CD4-positive, alpha-beta memory T cell (primary cell): ENCODE measurements at regions of chr6 and their contacts with region 1.

Region 1: GRCh38 chr6:34161857-34162515 is 16.1 kb upstream of the GRM4 start:
- DNase-seq: no peak
- H3K4me3 ChIP-seq: no peak overlapping the region
- H3K4me3 Mint-ChIP-seq: peak overlapping the region in 1 of 8 donors; percentile 7
- H3K27ac ChIP-seq: no peak overlapping the region
- H3K27ac Mint-ChIP-seq: peak overlapping the region in 1 of 7 donors; percentile 66
- H3K4me1 ChIP-seq: peaks cover 4% of the 10 kb centered on the region
- H3K4me1 Mint-ChIP-seq: peaks cover 0 to 8% (median 4%) of the 10 kb centered on the region in 4 donors
- H3K27me3 ChIP-seq: no peaks in the 10 kb centered on the region
- H3K27me3 Mint-ChIP-seq: no peaks in the 10 kb centered on the region

Region 2: DNA sequence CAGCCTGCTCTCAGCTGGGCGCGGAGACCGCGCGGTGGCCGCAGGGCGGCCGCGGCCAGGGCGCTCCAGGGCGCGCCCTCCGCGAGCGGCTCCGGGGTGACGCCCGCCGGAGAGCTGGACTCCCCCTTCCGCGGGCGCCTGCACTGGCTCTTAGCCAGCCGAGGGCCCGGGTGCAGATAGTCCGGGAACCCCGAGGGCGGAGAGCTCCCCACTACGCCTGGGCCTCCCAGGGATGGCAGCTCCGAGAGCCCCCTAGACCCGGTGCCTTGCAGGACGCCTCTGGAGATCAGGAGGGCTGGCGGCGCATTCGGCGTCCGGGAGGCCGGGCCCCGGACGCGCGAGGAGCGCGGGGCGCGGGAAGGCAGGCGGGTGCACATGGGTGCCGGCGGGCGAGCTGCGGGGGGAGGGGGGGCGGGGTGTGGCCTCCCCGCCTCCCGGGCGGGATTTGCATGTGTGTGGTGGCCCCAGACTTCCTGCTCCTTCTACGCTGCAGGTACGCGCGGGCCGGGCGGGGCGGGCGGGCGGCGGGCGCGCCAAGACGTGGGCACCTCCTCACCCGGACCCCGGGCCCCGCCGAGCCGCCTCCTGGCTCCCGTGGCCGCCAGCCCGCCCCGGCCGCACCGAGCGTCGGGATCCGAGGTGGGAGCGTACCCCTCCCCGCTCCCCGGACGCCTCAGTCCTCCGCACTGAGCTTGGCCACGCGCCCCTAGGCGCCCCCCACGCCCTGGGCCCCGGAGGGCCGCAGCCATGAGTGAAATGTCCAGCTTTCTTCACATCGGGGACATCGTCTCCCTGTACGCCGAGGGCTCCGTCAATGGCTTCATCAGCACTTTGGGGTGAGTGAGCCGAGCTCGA is 540.9 kb before region 1 on chr6 and contains the start of gene ITPR3:
- CTCF ChIA-PET with region 1: no interaction called
- POLR2A ChIA-PET with region 1: no interaction called
- intact Hi-C with region 1: no loop called
- DNase-seq: peak; percentile 78 to 85 (median 83)
- H3K4me3 ChIP-seq: peak within 1 kb of the TSS; percentile 71 to 88
- H3K4me3 Mint-ChIP-seq: peak within 1 kb of the TSS; percentile 93 to 99 (median 96)
- H3K27ac ChIP-seq: peak within 1 kb of the TSS; percentile 92
- H3K27ac Mint-ChIP-seq: peak within 1 kb of the TSS; percentile 91 to 98 (median 97)
- H3K4me1 ChIP-seq: peaks cover 48% of the 10 kb centered on the region
- H3K4me1 Mint-ChIP-seq: peaks cover 35 to 62% (median 48%) of the 10 kb centered on the region in 4 donors
- H3K27me3 ChIP-seq: no peaks in the 10 kb centered on the region
- H3K27me3 Mint-ChIP-seq: no peaks in the 10 kb centered on the region
- total RNA-seq, gene ITPR3: 71.2 to 72.4 TPM

Region 3: GRCh38 chr6:34182751-34183531 is 21.0 kb after region 1 on chr6:
- CTCF ChIA-PET with region 1: interaction called, 18 read pairs
- POLR2A ChIA-PET with region 1: interaction called, 4 read pairs
- intact Hi-C with region 1: loop called (anchors 2 kb)
- DNase-seq: peak; percentile 79 to 90 (median 81)
- H3K4me3 ChIP-seq: peak overlapping the region in 1 of 2 donors; percentile 32
- H3K4me3 Mint-ChIP-seq: peak overlapping the region; percentile 45 to 80 (median 74)
- H3K27ac ChIP-seq: peak overlapping the region; percentile 33
- H3K27ac Mint-ChIP-seq: peak overlapping the region; percentile 72 to 95 (median 82)
- H3K4me1 ChIP-seq: peaks cover 25% of the 10 kb centered on the region
- H3K4me1 Mint-ChIP-seq: peaks cover 22 to 26% (median 24%) of the 10 kb centered on the region in 4 donors
- H3K27me3 ChIP-seq: no peaks in the 10 kb centered on the region
- H3K27me3 Mint-ChIP-seq: no peaks in the 10 kb centered on the region

Region 4: DNA sequence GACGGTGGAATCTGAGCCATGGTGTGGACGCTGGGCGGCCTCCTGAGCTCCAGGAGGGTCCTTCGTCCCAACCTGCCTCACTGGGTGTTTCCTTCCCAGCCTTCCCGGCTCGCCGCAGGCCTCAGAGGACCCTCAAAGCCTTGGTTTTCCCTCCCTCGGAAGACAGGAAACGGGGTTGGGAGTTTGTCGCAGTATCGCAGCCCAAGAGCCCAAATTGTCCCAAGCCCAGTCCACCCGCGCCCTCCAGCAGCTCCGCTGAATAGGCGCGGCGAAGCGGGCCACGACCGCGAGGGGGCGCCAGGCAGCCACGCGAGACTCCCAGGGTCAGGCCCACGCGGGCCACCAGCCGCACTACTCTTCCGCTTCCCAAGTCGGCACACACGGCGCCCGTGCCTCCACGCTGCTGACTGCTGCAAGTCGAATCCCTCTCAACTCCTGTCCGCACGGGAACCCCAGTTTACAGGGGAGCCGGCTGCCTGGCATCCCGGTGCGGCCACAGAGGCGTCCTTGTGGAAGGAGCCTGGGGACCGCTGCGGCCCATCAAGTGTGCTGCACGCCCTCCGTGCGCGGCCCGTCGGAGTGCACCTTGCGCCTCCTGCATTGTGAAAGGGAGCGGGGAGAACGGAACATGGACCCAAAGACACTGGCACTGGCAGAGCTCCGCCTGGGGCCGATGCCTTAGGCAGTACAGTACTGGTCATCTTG is 34.3 kb after region 1 on chr6:
- CTCF ChIA-PET with region 1: interaction called, 30 read pairs
- POLR2A ChIA-PET with region 1: interaction called, 4 read pairs
- intact Hi-C with region 1: loop called (anchors 1 kb)
- DNase-seq: peak; percentile 81 to 89 (median 85)
- H3K4me3 ChIP-seq: peak overlapping the region; percentile 47 to 58
- H3K4me3 Mint-ChIP-seq: peak overlapping the region; percentile 79 to 89 (median 85)
- H3K27ac ChIP-seq: peak overlapping the region; percentile 48
- H3K27ac Mint-ChIP-seq: peak overlapping the region in 6 of 7 donors; percentile 42 to 78 (median 56)
- H3K4me1 ChIP-seq: peaks cover 9% of the 10 kb centered on the region
- H3K4me1 Mint-ChIP-seq: peaks cover 2 to 9% (median 5%) of the 10 kb centered on the region in 4 donors
- H3K27me3 ChIP-seq: no peaks in the 10 kb centered on the region
- H3K27me3 Mint-ChIP-seq: no peaks in the 10 kb centered on the region

Region 5: DNA sequence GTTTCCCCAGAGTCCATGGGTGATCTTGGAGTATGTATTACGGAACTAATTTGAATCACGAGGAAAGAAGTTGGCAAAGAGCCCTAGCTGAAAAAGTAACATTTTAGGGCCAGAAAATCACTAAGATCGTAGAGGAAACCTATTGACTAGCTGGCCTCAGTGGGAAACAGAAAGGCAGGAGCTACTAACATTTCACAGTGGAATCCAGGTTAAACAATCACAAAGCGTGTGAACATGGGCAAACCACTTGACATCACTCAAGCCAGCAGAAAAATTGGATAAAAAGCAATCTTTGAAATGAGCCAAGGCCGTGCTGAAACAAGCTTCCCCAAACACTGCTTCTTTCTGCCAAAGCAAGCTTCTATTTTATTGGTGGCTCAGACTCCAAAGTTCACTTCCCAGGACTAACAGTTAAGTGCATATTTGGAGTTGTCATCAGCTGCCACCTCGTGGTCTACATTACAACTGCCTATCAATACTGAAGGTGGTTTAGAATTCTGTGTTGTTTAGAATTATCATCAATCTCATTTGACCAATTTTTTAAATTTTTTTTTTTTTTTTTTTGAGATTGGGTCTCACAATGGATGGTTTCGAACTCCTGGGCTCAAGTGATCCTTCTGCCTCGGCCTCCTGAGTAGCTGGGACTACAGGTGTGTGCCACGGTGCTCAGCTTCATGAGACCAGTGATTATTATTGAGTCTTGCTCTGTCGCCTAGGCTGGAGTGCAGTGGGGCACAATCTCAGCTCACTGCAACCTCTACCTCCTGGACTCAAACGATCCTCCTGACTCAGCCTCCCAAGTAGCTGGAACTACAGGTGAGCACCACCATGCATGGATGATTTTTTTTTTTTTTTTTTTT is 253.2 kb after region 1 on chr6:
- CTCF ChIA-PET with region 1: interaction called, 54 read pairs
- POLR2A ChIA-PET with region 1: no interaction called
- intact Hi-C with region 1: loop called (anchors 1 kb)
- DNase-seq: peak; percentile 50 to 68 (median 51)
- H3K4me3 ChIP-seq: no peak overlapping the region
- H3K4me3 Mint-ChIP-seq: no peak overlapping the region
- H3K27ac ChIP-seq: no peak overlapping the region
- H3K27ac Mint-ChIP-seq: peak overlapping the region in 4 of 7 donors; percentile 2 to 86 (median 16)
- H3K4me1 ChIP-seq: no peaks in the 10 kb centered on the region
- H3K4me1 Mint-ChIP-seq: peaks cover 3 to 19% (median 5%) of the 10 kb centered on the region in 4 donors
- H3K27me3 ChIP-seq: no peaks in the 10 kb centered on the region
- H3K27me3 Mint-ChIP-seq: no peaks in the 10 kb centered on the region

Region 6: GRCh38 chr6:35139908-35140655 is 978.1 kb after region 1 on chr6:
- CTCF ChIA-PET with region 1: interaction called, 10 read pairs
- POLR2A ChIA-PET with region 1: no interaction called
- intact Hi-C with region 1: loop called (anchors 5 kb)
- DNase-seq: peak in 4 of 5 donors; percentile 36 to 44 (median 37)
- H3K4me3 ChIP-seq: no peak overlapping the region
- H3K4me3 Mint-ChIP-seq: peak overlapping the region in 7 of 8 donors; percentile 13 to 82 (median 49)
- H3K27ac ChIP-seq: no peak overlapping the region
- H3K27ac Mint-ChIP-seq: peak overlapping the region in 2 of 7 donors; percentile 43 to 63
- H3K4me1 ChIP-seq: peaks cover 15% of the 10 kb centered on the region
- H3K4me1 Mint-ChIP-seq: peaks cover 8 to 14% (median 10%) of the 10 kb centered on the region in 4 donors
- H3K27me3 ChIP-seq: peaks cover 7% of the 10 kb centered on the region
- H3K27me3 Mint-ChIP-seq: peaks cover 7 to 12% of the 10 kb centered on the region in 2 donors